Keratinocyte (primary cell): ENCODE measurements at regions of chr21 and their contacts with region 1.

Region 1: GRCh38 chr21:26389971-26390641 is 183.0 kb downstream of the CYYR1 start:
- DNase-seq: peak; percentile 100
- H3K4me3 ChIP-seq: no peak overlapping the region
- H3K27ac ChIP-seq: peak overlapping the region; percentile 79
- H3K4me1 ChIP-seq: peaks cover 45% of the 10 kb centered on the region
- H3K27me3 ChIP-seq: no peaks in the 10 kb centered on the region
- CTCF ChIP-seq: no peak

Region 2: GRCh38 chr21:26170471-26171257 is 219.4 kb before region 1 on chr21 and contains the start of gene APP:
- dilution Hi-C with region 1: loop called (anchors 25 kb)
- DNase-seq: no peak
- H3K4me3 ChIP-seq: peak within 1 kb of the TSS; percentile 89 to 98 (median 97)
- H3K27ac ChIP-seq: peak within 1 kb of the TSS; percentile 85
- H3K4me1 ChIP-seq: peaks cover 30% of the 10 kb centered on the region
- H3K27me3 ChIP-seq: no peaks in the 10 kb centered on the region
- CTCF ChIP-seq: peak in 2 of 3 experiments; percentile 81 to 85
- polyA plus RNA-seq, gene APP: 1,015 to 1,448 TPM (median 1,185 TPM) in 3 replicates